ENCODE measurements at regions of chr2 and their contacts with region 1.

Region 1: DNA sequence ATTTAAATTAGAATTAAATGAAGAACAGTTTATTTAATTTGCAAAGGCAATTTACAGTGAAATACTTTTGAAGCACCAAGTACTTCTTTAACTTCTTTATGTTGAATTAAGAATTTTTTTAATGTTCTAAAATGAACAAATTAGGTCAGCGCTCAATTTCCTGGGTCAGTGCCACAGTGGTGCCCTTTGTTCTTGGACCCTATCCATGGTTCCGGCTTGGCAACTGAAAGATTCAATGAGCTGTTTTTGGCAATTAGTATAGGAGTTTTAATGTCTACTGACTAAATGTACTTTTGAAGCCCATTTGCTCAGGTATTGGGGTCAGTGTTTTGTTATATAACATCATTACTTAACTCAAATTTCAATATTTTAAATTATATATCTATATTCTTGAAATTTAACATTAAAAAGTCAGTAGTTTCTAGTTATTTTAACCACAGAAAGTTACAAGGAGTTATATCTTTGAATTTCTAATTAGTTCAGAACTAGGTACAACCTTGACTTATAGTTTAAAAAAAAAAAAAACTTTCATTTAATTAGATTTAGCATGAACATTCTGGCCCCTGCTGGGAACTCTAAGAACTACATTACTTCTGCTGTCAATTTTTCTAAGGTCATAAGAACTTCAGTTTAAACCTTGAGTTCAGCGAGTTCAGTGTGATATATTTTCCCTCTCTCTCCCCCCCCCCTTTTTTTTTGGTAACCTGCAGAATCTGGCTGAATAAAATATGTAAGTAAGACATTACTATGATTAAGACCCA is 7.6 kb upstream of the MSTN start:
- DNase-seq: peak; percentile 21
- CTCF ChIP-seq: peak; percentile 44

Region 2: GRCh38 chr2:189661148-189661956 is 408.8 kb before region 1 on chr2 and contains the start of gene ASNSD1:
- in situ Hi-C with region 1: loop called (anchors 25 kb)
- DNase-seq: peak; percentile 95
- CTCF ChIP-seq: peak; percentile 92

Region 3: GRCh38 chr2:189798312-189799029 is 271.6 kb before region 1 on chr2:
- in situ Hi-C with region 1: loop called (anchors 10 kb)
- DNase-seq: peak; percentile 17
- CTCF ChIP-seq: peak; percentile 33

Measured in GM13976 (cell line).